ENCODE measurements at regions of chr19 and their contacts with region 1.

Region 1: GRCh38 chr19:10126213-10126639 is 6.5 kb upstream of the EIF3G start:
- DNase-seq: no peak
- ATAC-seq: no peak
- H3K4me3 ChIP-seq: no peak overlapping the region
- H3K4me3 Mint-ChIP-seq: no peak overlapping the region
- H3K27ac ChIP-seq: no peak overlapping the region
- H3K27ac Mint-ChIP-seq: no peak overlapping the region
- H3K4me1 ChIP-seq: no peaks in the 10 kb centered on the region
- H3K4me1 Mint-ChIP-seq: no peaks in the 10 kb centered on the region
- H3K27me3 ChIP-seq: no peaks in the 10 kb centered on the region
- H3K27me3 Mint-ChIP-seq: no peaks in the 10 kb centered on the region
- CTCF ChIP-seq: no peak

Region 2: GRCh38 chr19:10142701-10143375 is 16.6 kb after region 1 on chr19:
- CTCF ChIA-PET with region 1: interaction called, 16 read pairs
- POLR2A ChIA-PET with region 1: interaction called, 11 read pairs
- intact Hi-C with region 1: no loop called
- DNase-seq: peak; percentile 19 to 86 (median 58)
- ATAC-seq: peak; percentile 94
- H3K4me3 ChIP-seq: peak overlapping the region; percentile 11 to 45
- H3K4me3 Mint-ChIP-seq: peak overlapping the region; percentile 76
- H3K27ac ChIP-seq: peak overlapping the region; percentile 80 to 94
- H3K27ac Mint-ChIP-seq: peak overlapping the region; percentile 98
- H3K4me1 ChIP-seq: peaks cover 45% of the 10 kb centered on the region
- H3K4me1 Mint-ChIP-seq: peaks cover 42% of the 10 kb centered on the region
- H3K27me3 ChIP-seq: no peaks in the 10 kb centered on the region
- H3K27me3 Mint-ChIP-seq: no peaks in the 10 kb centered on the region
- CTCF ChIP-seq: peak; percentile 29

Region 3: DNA sequence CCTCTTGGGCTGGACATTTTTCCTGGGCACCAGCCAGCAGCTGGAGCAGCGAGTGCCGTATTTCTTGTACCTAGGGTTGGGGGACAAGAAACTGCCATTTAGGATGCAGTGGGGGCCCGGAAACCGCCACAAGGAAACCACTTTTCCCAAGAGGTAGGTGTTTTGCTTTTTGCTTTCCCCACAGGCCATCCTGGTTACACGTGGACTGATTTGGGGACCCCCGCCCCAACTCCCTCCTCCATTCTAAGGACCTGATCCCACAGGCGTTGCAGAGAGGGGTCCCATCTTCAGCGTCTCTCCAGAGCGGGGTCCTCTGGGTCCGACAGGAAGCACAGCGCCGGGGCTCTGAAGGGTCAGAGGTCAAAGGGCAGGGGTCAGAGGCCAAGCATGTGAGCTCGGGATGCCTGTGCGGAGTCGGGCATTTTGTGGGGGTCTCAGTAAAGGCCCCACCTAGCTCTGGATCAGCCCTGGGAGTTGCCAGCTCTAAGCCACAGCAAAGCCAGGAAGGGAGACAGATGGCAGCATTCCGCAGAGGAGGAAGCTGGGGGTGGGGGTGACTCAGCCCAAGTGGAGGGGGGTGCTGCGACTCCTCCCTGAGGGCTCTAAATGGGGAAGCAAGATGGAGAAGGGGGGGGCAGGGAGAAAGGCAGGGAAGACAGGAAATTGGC is 179.0 kb after region 1 on chr19:
- CTCF ChIA-PET with region 1: no interaction called
- POLR2A ChIA-PET with region 1: no interaction called
- intact Hi-C with region 1: no loop called
- DNase-seq: peak in 2 of 9 experiments; percentile 15 to 22
- ATAC-seq: no peak
- H3K4me3 ChIP-seq: no peak overlapping the region
- H3K4me3 Mint-ChIP-seq: no peak overlapping the region
- H3K27ac ChIP-seq: no peak overlapping the region
- H3K27ac Mint-ChIP-seq: no peak overlapping the region
- H3K4me1 ChIP-seq: no peaks in the 10 kb centered on the region
- H3K4me1 Mint-ChIP-seq: no peaks in the 10 kb centered on the region
- H3K27me3 ChIP-seq: no peaks in the 10 kb centered on the region
- H3K27me3 Mint-ChIP-seq: peaks cover 2% of the 10 kb centered on the region
- CTCF ChIP-seq: no peak

Measured in CD8-positive, alpha-beta T cell (primary cell).